CD8-positive, alpha-beta T cell (primary cell): ENCODE measurements at regions of chr14 and their contacts with region 1.

Region 1: GRCh38 chr14:103910262-103910935 is 17.9 kb upstream of the TDRD9 start:
- DNase-seq: peak; percentile 59 to 86 (median 75)
- ATAC-seq: peak; percentile 76
- H3K4me3 ChIP-seq: peak overlapping the region; percentile 30 to 51
- H3K4me3 Mint-ChIP-seq: peak overlapping the region; percentile 73
- H3K27ac ChIP-seq: peak overlapping the region; percentile 21 to 45
- H3K27ac Mint-ChIP-seq: peak overlapping the region; percentile 89
- H3K4me1 ChIP-seq: peaks cover 28% of the 10 kb centered on the region
- H3K4me1 Mint-ChIP-seq: peaks cover 26% of the 10 kb centered on the region
- H3K27me3 ChIP-seq: no peaks in the 10 kb centered on the region
- H3K27me3 Mint-ChIP-seq: peaks cover 2% of the 10 kb centered on the region
- CTCF ChIP-seq: peak; percentile 79

Region 2: GRCh38 chr14:103520657-103521437 is 389.6 kb before region 1 on chr14:
- CTCF ChIA-PET with region 1: no interaction called
- POLR2A ChIA-PET with region 1: no interaction called
- intact Hi-C with region 1: loop called in 1 of 2 experiments (anchors 5 kb)
- DNase-seq: peak; percentile 34 to 87 (median 69)
- ATAC-seq: peak; percentile 79
- H3K4me3 ChIP-seq: peak overlapping the region; percentile 41 to 57
- H3K4me3 Mint-ChIP-seq: peak overlapping the region; percentile 71
- H3K27ac ChIP-seq: no peak overlapping the region
- H3K27ac Mint-ChIP-seq: no peak overlapping the region
- H3K4me1 ChIP-seq: peaks cover 24% of the 10 kb centered on the region
- H3K4me1 Mint-ChIP-seq: peaks cover 10% of the 10 kb centered on the region
- H3K27me3 ChIP-seq: peaks cover 5 to 14% of the 10 kb centered on the region in 2 experiments
- H3K27me3 Mint-ChIP-seq: peaks cover 5% of the 10 kb centered on the region
- CTCF ChIP-seq: peak; percentile 57

Region 3: GRCh38 chr14:103808403-103809001 is 101.9 kb before region 1 on chr14:
- CTCF ChIA-PET with region 1: interaction called, 259 read pairs
- POLR2A ChIA-PET with region 1: interaction called, 3 read pairs
- intact Hi-C with region 1: loop called (anchors 1 kb)
- DNase-seq: peak; percentile 28 to 80 (median 73)
- ATAC-seq: peak; percentile 78
- H3K4me3 ChIP-seq: no peak overlapping the region
- H3K4me3 Mint-ChIP-seq: no peak overlapping the region
- H3K27ac ChIP-seq: no peak overlapping the region
- H3K27ac Mint-ChIP-seq: no peak overlapping the region
- H3K4me1 ChIP-seq: no peaks in the 10 kb centered on the region
- H3K4me1 Mint-ChIP-seq: peaks cover 15% of the 10 kb centered on the region
- H3K27me3 ChIP-seq: no peaks in the 10 kb centered on the region
- H3K27me3 Mint-ChIP-seq: no peaks in the 10 kb centered on the region
- CTCF ChIP-seq: peak; percentile 96

Region 4: DNA sequence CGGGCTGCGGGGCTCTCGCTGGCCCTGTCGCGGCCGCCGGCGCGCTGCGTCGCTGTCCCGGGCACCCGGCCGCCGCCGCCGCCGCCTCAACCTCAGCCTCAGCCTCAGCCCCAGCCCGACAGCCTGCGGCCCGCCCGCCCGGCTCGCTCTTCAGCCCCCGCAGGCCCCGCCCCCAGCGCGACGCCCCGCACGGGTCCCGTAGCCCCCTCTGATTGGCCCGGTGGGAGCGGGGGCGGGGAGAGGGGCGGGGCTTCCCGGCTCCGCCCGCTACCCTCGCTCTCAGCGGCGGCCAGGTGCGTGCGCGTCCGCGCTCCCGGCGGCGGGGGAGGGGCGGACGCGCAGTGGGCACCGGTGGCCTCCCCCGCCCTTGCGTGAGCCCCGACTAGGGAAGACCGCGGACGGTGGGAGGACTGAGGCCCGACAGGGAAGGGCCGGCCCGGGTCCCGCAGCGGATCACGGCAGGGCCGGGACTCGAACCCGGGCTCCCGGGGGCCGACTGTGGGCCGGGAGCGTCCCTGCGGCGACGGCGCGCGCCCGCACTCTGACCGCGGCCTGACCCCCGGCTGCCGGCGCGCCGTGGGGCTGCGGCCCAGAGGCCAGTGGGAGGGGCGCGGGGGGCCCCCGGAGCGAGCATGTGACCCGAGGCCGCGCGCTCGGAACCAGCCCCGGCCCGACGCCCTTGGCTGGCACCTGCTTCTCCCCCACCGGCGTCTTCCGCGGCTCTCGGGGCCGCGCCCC is 62.8 kb before region 1 on chr14 and contains the start of gene PPP1R13B:
- CTCF ChIA-PET with region 1: interaction called, 6 read pairs
- POLR2A ChIA-PET with region 1: no interaction called
- intact Hi-C with region 1: loop called in 1 of 2 experiments (anchors 2 kb)
- DNase-seq: peak; percentile 88 to 97 (median 92)
- ATAC-seq: peak; percentile 98
- H3K4me3 ChIP-seq: peak within 1 kb of the TSS; percentile 65 to 73
- H3K4me3 Mint-ChIP-seq: peak within 1 kb of the TSS; percentile 90
- H3K27ac ChIP-seq: peak within 1 kb of the TSS in 1 of 2 experiments; percentile 27
- H3K27ac Mint-ChIP-seq: peak within 1 kb of the TSS; percentile 74
- H3K4me1 ChIP-seq: peaks cover 14% of the 10 kb centered on the region
- H3K4me1 Mint-ChIP-seq: peaks cover 20% of the 10 kb centered on the region
- H3K27me3 ChIP-seq: no peaks in the 10 kb centered on the region
- H3K27me3 Mint-ChIP-seq: no peaks in the 10 kb centered on the region
- CTCF ChIP-seq: no peak
- total RNA-seq, gene PPP1R13B: 20.9 to 22.6 TPM

Region 5: DNA sequence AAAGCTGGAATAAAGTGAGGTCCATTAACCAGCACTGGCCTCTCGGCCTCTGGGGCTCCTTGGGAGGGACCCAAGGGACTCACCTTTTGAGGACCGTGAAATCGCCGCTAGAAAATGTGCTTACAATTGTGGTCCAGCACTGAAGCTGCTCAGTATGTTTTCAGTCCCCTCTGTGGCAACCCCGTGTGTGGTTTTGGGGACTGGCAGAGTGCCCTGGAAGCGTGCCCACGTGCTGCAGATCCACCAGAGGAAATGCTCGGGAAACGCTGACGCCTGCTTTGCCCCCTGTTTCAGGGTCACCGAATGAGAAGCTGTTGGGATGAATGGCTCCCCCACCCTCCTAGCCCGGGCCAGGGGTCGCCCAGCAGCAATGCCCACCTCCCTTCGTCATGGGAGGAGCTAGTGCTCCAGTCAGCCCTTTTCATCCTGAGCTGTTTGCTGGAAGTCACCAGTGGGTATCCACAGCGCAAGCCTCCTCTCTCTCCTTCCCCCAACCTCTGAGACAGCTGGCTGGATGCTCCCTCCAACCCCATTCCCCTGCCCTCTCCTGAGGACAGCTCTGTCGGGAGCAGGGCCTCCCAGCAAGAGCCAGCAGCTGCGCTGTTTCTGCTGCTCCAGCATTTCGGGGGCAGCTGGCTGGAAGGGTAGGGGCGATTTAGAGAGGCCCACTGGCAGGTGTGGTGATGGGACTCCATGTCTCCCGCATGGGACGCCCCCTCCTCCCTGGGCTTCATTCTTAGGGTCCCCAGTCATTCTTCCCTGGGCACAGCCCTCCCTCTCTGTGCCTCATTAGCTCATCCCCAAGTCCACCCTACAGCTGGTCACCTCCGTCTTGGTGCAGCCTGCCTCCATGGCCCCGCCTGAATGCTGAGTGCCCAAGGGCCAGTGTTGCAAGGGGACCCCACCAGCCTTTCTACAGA is 29.8 kb before region 1 on chr14:
- CTCF ChIA-PET with region 1: interaction called, 12 read pairs
- POLR2A ChIA-PET with region 1: no interaction called
- intact Hi-C with region 1: loop called in 1 of 2 experiments (anchors 1 kb)
- DNase-seq: peak in 8 of 9 experiments; percentile 25 to 74 (median 58)
- ATAC-seq: peak; percentile 70
- H3K4me3 ChIP-seq: peak overlapping the region; percentile 30 to 32
- H3K4me3 Mint-ChIP-seq: peak overlapping the region; percentile 72
- H3K27ac ChIP-seq: no peak overlapping the region
- H3K27ac Mint-ChIP-seq: no peak overlapping the region
- H3K4me1 ChIP-seq: peaks cover 21% of the 10 kb centered on the region
- H3K4me1 Mint-ChIP-seq: peaks cover 21% of the 10 kb centered on the region
- H3K27me3 ChIP-seq: no peaks in the 10 kb centered on the region
- H3K27me3 Mint-ChIP-seq: no peaks in the 10 kb centered on the region
- CTCF ChIP-seq: no peak

Region 6: DNA sequence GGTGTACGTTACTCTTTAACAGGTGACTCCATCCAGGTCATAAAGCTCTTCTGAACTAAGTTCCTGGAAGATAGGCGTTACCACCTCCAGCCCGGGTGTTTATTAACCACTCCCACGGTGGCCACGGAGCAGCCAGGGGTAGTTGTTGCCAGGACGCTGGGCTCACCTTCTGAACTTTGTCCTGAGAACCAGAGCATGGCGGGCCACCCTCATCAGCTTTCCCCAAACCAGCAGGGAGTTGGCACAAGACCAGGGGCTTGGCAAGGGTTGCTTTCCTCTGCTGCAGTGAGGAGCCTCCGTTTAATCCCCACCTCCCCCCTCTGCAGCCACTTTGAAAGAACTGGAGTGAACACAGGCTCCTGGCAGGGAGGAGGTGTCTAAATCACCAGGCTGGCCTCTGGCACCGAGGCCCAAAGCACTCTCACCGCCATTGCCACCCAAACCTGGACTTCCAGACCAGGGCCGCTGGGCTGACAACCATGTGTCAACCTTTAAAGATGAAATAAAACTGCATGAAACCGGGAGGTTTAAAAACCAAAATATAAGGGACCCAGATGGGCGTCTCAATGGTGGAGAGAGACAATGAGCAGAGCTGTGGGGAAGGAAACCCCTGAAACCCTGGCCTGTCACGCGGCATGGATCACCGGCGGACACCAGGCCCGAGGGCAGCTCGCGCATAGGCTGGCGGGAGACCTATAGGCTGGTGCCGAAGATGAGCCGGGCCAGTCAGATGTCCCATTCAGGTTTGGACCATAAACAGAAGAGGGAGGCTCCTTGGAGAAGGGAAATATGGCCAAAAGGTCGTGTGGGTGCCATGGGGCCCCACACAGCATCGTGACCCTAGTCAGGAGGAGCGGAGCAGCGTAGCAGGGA is 13.1 kb before region 1 on chr14:
- CTCF ChIA-PET with region 1: interaction called, 70 read pairs
- POLR2A ChIA-PET with region 1: interaction called, 6 read pairs
- intact Hi-C with region 1: loop called in 1 of 2 experiments (anchors 1 kb)
- DNase-seq: no peak
- ATAC-seq: no peak
- H3K4me3 ChIP-seq: no peak overlapping the region
- H3K4me3 Mint-ChIP-seq: no peak overlapping the region
- H3K27ac ChIP-seq: no peak overlapping the region
- H3K27ac Mint-ChIP-seq: no peak overlapping the region
- H3K4me1 ChIP-seq: peaks cover 4% of the 10 kb centered on the region
- H3K4me1 Mint-ChIP-seq: peaks cover 5% of the 10 kb centered on the region
- H3K27me3 ChIP-seq: no peaks in the 10 kb centered on the region
- H3K27me3 Mint-ChIP-seq: peaks cover 2% of the 10 kb centered on the region
- CTCF ChIP-seq: no peak

Region 7: DNA sequence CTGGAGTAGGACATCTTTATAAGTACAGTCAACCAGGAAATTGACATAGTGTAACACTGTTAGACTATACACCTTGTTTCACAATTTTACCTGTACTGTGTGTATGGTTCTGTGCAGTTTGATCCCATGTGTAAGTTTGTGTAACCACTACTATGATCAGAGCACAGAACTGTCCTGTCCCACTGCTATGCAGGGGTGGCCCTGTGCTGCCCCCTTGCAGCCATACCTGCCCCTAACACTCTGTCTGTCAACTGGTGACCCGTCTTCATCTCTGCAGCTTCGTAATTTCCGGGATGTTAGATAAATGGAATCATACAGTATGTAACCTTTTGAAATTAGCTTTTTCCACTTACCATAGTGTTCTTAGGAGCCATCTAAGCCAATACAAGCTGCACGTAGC is 90.6 kb after region 1 on chr14:
- CTCF ChIA-PET with region 1: no interaction called
- POLR2A ChIA-PET with region 1: interaction called, 3 read pairs
- intact Hi-C with region 1: loop called in 1 of 2 experiments (anchors 1 kb)
- DNase-seq: peak in 5 of 9 experiments; percentile 13 to 39 (median 29)
- ATAC-seq: peak; percentile 58
- H3K4me3 ChIP-seq: no peak overlapping the region
- H3K4me3 Mint-ChIP-seq: no peak overlapping the region
- H3K27ac ChIP-seq: no peak overlapping the region
- H3K27ac Mint-ChIP-seq: no peak overlapping the region
- H3K4me1 ChIP-seq: no peaks in the 10 kb centered on the region
- H3K4me1 Mint-ChIP-seq: no peaks in the 10 kb centered on the region
- H3K27me3 ChIP-seq: no peaks in the 10 kb centered on the region
- H3K27me3 Mint-ChIP-seq: peaks cover 6% of the 10 kb centered on the region
- CTCF ChIP-seq: no peak